ENCODE measurements at regions of chr2 and their contacts with region 1.

Region 1: DNA sequence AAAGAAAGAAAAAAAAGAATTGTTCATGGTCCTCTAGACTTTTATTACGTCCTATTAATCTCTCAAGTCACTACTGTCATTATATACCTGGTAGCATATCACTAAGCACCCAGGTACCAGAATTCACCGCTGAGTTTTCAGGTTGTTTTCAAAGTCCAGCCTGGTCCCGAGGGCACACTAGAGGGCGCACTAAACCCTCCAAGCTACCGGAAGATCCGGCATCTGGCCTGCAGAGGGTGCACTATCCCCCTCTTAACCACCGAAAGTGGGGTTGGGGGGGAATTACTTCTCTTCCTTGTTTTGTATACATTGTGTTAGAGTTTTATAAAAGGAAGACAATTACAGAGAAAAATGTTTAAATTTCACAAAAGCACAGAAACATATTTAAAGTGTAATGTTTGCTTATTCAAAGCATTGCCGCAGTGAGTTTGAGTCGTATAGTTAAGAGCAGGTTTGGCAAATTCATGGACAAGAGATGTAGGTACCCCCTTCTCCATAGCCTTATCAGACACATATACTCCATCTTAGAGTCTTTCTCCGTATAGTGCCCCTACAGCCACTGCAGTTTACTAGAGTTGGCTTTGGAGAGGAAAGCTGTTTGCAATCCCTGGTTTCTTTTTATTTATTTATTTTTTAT is 19.2 kb downstream of the MOGAT1 start:
- DNase-seq: peak; percentile 61
- H3K4me3 Mint-ChIP-seq: no peak overlapping the region
- H3K27ac Mint-ChIP-seq: no peak overlapping the region
- H3K4me1 Mint-ChIP-seq: peaks cover 20% of the 10 kb centered on the region
- H3K27me3 Mint-ChIP-seq: peaks cover 15% of the 10 kb centered on the region

Region 2: DNA sequence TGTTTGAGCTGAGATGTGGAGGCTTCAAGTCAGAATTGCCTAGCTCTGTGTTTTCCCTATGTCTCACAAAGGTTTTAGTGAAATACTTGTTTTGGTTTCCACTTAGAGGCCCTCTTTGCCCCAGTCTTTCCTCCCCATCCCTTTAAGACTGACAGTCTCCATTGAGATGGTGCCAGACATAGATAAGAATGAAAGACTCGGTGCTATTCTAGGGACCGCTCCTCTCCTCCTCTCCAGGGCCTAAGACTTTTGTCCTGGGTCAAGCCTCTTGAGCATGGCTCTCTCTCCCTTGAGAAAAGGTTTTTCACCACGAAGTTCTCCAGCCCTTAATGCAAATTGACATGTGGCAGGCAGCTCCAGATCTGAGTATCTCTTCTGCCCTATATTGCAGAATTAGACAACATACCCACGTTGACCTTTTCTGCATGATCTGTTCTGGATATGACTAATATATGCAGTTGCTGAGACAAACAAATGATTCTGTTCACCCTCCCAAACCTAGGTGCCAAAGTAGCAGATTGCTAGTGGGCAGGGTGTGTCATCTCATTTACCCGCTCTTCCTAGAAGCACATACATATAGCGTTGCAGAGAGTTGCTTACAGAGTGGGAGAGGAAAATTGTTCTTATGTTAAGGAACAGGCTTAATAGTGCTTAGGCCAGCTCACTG is 122.6 kb after region 1 on chr2:
- intact Hi-C with region 1: no loop called
- DNase-seq: no peak
- H3K4me3 Mint-ChIP-seq: peak overlapping the region; percentile 23
- H3K27ac Mint-ChIP-seq: peak overlapping the region; percentile 94
- H3K4me1 Mint-ChIP-seq: peaks cover 24% of the 10 kb centered on the region
- H3K27me3 Mint-ChIP-seq: no peaks in the 10 kb centered on the region

Region 3: DNA sequence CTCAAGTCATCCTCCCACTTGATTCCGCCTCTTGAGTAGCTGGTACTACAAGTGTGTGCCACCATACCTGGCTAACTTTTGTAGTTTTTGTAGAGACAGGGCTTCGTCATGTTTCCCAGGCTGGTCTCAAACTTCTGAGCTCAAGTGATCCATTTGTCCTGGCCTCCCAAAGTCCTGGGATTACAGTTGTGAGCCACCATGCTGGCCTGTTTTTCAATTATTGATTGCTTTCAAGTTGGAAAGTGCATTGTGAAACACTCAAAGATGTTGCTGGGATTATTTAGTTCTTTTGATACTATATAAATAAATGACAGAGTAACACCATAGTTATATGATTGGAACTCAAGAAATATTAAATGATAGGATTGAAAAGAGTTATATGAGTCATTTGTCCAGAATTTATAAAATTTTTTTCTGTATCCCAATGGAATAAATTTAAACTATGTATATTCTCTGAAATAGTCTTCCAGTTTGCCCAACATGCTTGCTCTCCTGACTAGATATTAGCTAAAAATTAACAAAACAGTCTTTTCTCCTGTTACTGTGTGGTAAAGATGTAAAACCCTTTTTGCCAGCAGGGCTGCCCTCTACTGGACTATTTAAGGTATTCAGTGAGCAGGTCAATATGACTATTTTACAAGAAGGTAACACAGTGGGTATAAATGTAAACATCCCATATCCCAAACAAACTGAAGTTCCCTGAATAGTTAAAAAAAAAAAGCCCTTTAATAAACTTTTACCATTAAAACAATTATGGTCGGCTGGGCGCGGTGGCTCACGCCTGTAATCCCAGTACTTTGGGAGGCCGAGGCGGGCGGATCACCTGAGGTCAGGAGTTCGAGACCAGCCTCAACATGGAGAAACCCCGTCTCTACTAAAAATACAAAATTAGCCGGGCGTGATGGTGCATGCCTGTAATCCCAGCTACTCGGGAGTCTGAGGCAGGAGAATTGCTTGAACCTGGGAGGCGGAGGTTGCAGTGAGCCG is 212.8 kb after region 1 on chr2:
- intact Hi-C with region 1: loop called (anchors 1 kb)
- DNase-seq: no peak
- H3K4me3 Mint-ChIP-seq: no peak overlapping the region
- H3K27ac Mint-ChIP-seq: no peak overlapping the region
- H3K4me1 Mint-ChIP-seq: peaks cover 26% of the 10 kb centered on the region
- H3K27me3 Mint-ChIP-seq: no peaks in the 10 kb centered on the region

Region 4: DNA sequence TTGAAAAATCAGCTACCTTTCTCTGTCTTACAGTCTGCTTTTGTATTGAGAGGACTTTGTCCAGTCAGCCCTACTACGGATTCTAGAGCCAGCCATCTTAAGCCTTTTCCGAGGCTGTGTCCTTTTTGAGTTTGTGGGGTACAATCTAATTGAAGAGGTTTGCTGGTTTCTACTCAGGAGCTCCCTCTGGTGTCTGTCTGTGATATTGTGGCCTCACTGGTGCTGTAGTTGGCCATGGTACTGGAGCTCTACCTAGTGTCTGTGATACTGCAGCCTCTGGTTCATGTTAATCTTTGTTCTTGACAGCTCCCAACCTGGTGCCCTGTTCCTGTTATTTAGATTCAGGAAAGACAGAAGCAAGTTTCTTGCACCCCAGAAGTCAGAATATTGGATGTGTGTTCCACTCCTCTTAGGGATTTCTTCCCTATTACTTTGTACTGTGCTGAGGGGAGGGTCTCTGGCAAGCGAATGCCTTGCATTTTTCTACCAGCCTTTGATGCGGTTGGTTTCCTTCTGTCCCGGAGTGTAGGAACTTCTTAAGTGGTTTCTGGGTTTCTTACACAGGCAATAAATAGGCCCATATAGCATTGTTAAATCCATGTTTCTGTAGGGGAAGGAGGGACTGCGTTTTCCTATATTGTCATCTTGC is 248.7 kb after region 1 on chr2:
- intact Hi-C with region 1: loop called (anchors 2 kb)
- DNase-seq: peak; percentile 53
- H3K4me3 Mint-ChIP-seq: no peak overlapping the region
- H3K27ac Mint-ChIP-seq: no peak overlapping the region
- H3K4me1 Mint-ChIP-seq: peaks cover 17% of the 10 kb centered on the region
- H3K27me3 Mint-ChIP-seq: no peaks in the 10 kb centered on the region

Measured in activated T-helper 2 cell treated with anti-CD3 and anti-CD28 coated beads, Interferon-gamma antibody, Interleukin-2, Interleukin-4, amounts not matched to agents 10 μg/mL and 5 μg/mL and 100 μg/mL, durations not matched to agents 14 hours and 24 hours and 36 hours (primary cell).